ENCODE measurements at regions of chr11 and their contacts with region 1.

Region 1: DNA sequence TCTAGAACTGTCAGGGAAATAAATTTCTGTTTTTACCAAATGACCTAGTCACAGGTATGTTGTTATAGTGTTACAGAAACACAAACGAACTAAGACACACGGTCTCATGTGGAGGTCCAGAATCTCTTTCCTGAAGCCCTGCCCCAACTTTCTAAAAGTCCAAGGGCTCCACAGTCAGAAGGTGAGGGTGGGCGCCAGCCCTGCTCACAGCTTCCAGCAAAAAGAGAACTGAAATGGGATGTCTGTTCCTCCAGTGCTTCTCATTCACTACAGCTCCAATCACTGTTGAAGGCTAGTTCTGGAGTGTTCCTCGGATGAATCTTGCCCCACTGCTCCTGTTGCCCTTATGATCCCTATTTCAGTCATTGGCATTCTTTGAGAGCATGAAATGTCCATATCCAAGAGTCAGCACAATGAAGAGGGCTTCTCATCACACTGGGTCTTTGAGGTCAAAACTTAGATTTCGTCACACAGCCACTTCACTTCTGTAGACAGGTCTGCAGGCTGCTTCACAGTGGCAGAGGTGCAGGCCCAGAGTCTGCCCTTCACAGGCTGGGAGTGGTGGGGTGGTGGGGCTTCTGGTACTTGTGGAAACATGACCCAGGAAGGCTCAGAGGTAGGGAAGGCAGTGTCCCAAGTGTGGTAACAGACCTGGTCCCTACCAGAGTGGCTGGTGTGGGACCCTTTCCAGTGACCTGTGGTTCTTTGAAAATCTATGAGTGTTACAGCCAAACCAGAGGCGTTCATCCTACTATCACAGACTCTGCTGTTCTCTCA is 34.9 kb downstream of the FAM181B start:
- DNase-seq: no peak

Region 2: GRCh38 chr11:81647374-81647773 is 1051.4 kb before region 1 on chr11:
- intact Hi-C with region 1: loop called (anchors 5 kb)
- DNase-seq: peak in 4 of 42 donors; percentile 7 to 18 (median 14)

Region 3: GRCh38 chr11:82811369-82811768 is 112.6 kb after region 1 on chr11:
- intact Hi-C with region 1: no loop called
- DNase-seq: no peak